Activated CD4-positive, alpha-beta T cell treated with anti-CD3 and anti-CD28 coated beads for 36 hours (primary cell): ENCODE measurements at regions of chr3 and their contacts with region 1.

Region 1: GRCh38 chr3:71317749-71318457 is 265.6 kb downstream of the FOXP1 start:
- DNase-seq: no peak
- ATAC-seq: no peak
- H3K4me3 Mint-ChIP-seq: no peak overlapping the region
- H3K27ac Mint-ChIP-seq: no peak overlapping the region
- H3K4me1 Mint-ChIP-seq: peaks cover 40% of the 10 kb centered on the region
- H3K27me3 Mint-ChIP-seq: no peaks in the 10 kb centered on the region

Region 2: DNA sequence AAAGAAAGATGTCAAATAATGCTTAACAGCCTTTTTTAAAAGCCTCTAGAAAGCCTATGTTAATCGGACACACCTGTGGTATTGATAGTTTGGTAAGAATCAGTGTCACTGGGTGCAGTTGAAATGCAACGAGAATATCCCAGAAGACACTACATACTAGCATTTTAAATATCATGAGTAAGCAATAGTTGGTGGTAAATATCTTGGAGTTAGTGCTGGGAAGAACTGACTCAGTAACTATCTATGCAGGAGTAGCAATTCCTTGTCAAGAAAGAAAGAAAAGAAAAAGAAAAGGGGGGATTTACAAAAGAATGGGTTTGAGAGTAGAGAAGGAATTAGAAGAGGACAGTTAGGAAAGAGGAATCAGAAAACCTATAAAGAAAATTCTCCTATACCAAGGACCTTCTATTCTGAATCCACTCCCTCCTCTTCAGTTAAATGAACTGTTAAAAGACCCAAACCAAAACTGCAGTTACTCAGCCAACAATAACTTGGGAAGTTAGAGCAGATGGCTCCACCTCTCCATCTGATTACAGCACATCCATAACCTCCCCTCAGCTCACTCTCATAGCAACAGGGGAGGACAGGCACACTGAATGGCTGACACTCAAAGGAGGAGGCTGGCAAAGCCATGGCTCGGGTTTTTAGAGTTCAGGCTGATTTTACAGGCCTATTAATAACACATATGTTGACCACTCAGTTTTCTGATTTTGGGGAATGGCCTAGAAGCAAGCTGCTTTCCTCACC is 797.8 kb before region 1 on chr3:
- CTCF ChIA-PET with region 1: no interaction called
- POLR2A ChIA-PET with region 1: no interaction called
- intact Hi-C with region 1: no loop called
- DNase-seq: no peak
- ATAC-seq: no peak
- H3K4me3 Mint-ChIP-seq: no peak overlapping the region
- H3K27ac Mint-ChIP-seq: no peak overlapping the region
- H3K4me1 Mint-ChIP-seq: no peaks in the 10 kb centered on the region
- H3K27me3 Mint-ChIP-seq: peaks cover 12% of the 10 kb centered on the region

Region 3: GRCh38 chr3:71269906-71270305 is 48.0 kb before region 1 on chr3:
- CTCF ChIA-PET with region 1: no interaction called
- POLR2A ChIA-PET with region 1: no interaction called
- intact Hi-C with region 1: no loop called
- DNase-seq: peak; percentile 31
- ATAC-seq: no peak
- H3K4me3 Mint-ChIP-seq: peak overlapping the region; percentile 44
- H3K27ac Mint-ChIP-seq: peak overlapping the region; percentile 86
- H3K4me1 Mint-ChIP-seq: peaks cover 74% of the 10 kb centered on the region
- H3K27me3 Mint-ChIP-seq: no peaks in the 10 kb centered on the region

Region 4: DNA sequence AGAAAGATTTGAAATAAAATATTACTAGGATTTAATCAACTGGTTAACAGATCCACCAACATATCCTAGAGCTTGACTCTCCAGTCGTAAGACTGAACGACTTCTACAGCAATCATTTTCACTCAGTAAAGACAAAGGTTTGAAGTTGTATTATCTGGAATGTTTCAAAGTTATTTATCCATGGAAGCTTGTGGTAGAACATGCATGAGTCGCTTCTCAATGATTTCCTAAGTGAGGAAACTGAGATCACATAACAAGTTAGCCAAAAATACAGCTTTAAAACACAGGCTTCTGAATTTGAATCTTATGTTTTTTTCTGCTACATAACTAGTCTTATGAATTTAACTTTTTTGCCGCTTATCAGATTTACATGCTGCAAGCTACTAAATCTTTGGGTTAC is 23.8 kb after region 1 on chr3:
- CTCF ChIA-PET with region 1: no interaction called
- POLR2A ChIA-PET with region 1: no interaction called
- intact Hi-C with region 1: loop called in 1 of 2 experiments (anchors 2 kb)
- DNase-seq: no peak
- ATAC-seq: no peak
- H3K4me3 Mint-ChIP-seq: no peak overlapping the region
- H3K27ac Mint-ChIP-seq: no peak overlapping the region
- H3K4me1 Mint-ChIP-seq: peaks cover 37% of the 10 kb centered on the region
- H3K27me3 Mint-ChIP-seq: no peaks in the 10 kb centered on the region

Region 5: DNA sequence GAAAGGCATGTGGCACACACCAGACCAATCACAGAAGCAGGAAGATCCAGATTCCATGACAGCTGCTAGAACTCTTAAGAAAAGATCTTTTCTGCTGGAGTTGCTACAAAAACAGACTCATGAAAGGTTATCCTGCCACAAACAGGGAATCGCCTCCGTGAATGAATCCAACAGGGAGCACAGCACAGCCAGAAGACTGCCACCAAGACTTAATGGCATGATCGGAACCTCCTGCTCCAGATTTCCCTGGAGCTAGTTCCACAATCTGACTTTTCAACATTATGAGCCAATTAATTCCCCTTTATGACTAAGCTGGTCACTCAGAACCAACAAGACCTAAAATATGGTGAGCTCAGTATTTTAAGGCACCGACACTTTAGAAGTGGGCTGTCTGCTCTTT is 33.1 kb after region 1 on chr3:
- CTCF ChIA-PET with region 1: interaction called, 4 read pairs
- POLR2A ChIA-PET with region 1: no interaction called
- intact Hi-C with region 1: loop called in 1 of 2 experiments (anchors 5 kb)
- DNase-seq: no peak
- ATAC-seq: no peak
- H3K4me3 Mint-ChIP-seq: no peak overlapping the region
- H3K27ac Mint-ChIP-seq: no peak overlapping the region
- H3K4me1 Mint-ChIP-seq: peaks cover 63% of the 10 kb centered on the region
- H3K27me3 Mint-ChIP-seq: no peaks in the 10 kb centered on the region